ENCODE measurements at regions of chr19 and their contacts with region 1.

Region 1: DNA sequence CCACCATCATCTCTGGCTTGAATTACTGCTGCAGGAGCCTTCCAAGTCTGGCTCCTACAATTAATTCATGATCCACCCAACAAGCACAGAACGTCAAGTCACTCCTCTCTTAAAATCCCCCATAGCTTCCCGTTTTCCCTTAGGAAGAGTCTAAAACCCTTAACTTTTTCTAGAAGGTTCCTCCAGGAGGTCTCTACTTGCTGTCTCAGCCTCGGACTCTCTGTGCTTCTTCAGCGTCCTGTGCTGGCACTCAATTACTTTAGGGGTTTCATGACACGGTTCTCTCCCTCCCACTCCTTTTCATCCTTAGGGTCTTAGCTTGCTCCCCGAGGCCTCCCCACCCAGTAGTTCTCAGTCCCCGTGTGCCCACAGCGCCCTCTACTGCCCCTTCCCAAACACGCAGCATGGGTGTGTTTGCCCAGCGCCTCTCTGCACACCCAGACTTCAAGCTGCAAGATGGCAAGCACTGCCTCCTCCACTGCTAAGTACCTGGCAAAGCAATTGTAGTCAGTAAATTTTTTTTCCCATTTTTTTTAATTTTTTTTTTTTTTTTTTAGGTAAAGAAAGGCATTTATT is 25.8 kb upstream of the MAP3K10 start:
- H3K4me3 ChIP-seq: no peak overlapping the region
- H3K27ac ChIP-seq: no peak overlapping the region
- H3K4me1 ChIP-seq: 0 out of 2 replicates have a peak, but pooled peaks cover 2% of the 10 kb centered on the region
- CTCF ChIP-seq: peak; percentile 80

Region 2: GRCh38 chr19:40055832-40056504 is 109.5 kb before region 1 on chr19 and contains the start of gene ZNF780B:
- CTCF ChIA-PET with region 1: interaction called, 10 read pairs
- POLR2A ChIA-PET with region 1: no interaction called
- H3K4me3 ChIP-seq: peak within 1 kb of the TSS; percentile 64
- H3K27ac ChIP-seq: peak within 1 kb of the TSS; percentile 68; the same call in 1 of the 2 replicates
- H3K4me1 ChIP-seq: peaks cover 16% of the 10 kb centered on the region; the same call in 1 of the 2 replicates
- CTCF ChIP-seq: no peak

Region 3: GRCh38 chr19:40144947-40145748 is 20.3 kb before region 1 on chr19:
- CTCF ChIA-PET with region 1: interaction called, 37 read pairs
- POLR2A ChIA-PET with region 1: no interaction called
- H3K4me3 ChIP-seq: no peak overlapping the region
- H3K27ac ChIP-seq: no peak overlapping the region
- H3K4me1 ChIP-seq: no peaks in the 10 kb centered on the region; the same call in 1 of the 2 replicates
- CTCF ChIP-seq: no peak

Region 4: DNA sequence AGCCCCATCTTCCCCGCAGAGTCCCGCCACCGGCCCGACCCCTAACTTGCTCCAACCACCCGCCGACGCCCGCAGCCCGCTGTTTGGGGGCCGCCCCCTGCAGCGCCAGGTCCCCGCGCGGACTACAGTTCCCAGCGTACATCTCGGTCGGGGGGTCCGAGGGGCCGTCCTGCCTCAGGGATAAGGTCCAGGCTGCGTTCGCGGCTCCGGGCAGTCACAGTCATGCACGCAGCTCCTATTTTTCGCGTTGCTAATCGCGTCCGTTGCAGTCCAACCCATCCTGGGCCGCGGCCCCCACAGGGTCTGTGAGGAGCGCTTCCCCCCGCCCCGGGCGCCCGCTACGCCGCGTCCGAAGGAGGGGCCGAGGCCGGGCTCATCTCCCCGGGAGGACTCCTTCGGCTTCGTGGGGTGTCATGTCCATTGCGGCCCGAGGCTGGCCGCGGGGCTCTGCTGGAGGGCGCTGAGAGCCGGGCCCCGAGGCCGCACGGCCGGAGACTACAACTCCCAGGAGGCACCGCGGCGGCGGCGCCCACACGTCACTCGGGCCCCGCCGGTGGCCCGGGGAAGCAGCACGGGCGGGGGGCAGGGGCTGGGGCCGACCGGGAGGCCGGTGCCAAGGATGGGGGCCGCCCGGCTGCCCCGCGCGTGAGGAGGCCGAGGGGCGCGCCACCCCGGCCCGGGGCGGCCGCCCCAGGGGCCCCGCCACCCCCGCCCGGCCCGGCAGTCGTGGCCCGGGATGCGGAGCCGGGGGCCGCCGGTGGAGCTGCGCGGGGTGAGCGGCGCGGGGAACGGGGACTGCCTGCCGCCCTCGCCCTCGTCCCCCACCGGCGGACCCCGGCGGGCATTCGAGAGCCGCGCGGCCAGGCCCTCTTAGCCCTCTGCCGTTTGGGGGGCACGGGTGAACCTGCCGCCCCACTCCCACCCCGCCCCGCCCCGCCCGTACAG is 25.7 kb after region 1 on chr19 and contains the start of gene MAP3K10:
- CTCF ChIA-PET with region 1: interaction called, 37 read pairs
- POLR2A ChIA-PET with region 1: no interaction called
- H3K4me3 ChIP-seq: peak within 1 kb of the TSS; percentile 81
- H3K27ac ChIP-seq: peak within 1 kb of the TSS; percentile 99
- H3K4me1 ChIP-seq: peaks cover 19% of the 10 kb centered on the region
- CTCF ChIP-seq: peak; percentile 51; the same call in 1 of the 2 replicates

Region 5: GRCh38 chr19:40221858-40222837 is 56.7 kb after region 1 on chr19:
- CTCF ChIA-PET with region 1: interaction called, 10 read pairs
- POLR2A ChIA-PET with region 1: no interaction called
- H3K4me3 ChIP-seq: no peak overlapping the region
- H3K27ac ChIP-seq: no peak overlapping the region
- H3K4me1 ChIP-seq: peaks cover 17% of the 10 kb centered on the region
- CTCF ChIP-seq: peak; percentile 93